Natural killer cell (primary cell): ENCODE measurements at regions of chr10 and their contacts with region 1.

Region 1: DNA sequence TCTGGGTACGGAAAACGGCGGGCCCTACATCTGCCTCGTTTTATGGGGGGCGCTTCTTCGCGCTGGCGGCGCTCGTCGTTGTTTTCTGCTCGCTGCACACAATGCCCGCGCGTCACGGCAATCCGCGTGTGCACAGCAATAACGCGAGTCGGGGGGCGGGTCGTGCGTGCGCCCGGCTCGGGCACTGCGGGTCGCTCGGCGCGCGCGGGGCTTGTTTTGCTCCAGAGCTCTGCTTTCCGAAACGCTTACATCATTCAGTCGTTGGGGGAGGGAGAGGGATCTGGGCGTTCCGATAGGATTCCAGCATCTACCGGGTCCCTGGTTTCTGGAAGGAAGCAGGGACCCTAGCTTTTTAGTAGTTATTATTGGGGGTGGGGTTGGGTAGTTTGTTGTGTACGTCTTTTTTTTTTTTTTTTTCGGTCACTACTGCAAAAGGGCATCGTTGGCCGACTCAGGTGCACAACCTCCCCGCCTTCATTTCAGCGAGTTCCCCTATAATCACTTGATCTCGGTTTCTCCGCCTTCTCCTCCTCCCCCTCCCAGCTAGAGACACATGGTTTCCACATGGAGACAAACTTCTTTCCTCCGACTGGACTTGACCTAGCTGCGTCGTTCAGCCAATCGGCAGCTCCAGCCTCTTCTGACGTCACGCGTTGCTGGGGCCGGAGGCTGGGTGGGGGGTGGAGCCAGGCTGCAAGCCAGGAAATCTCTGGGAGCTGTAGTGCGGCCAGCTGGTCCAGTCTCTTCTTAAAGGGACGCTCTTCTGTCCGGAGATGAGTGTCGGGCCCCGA is 3.5 kb downstream of the MXI1 start:
- DNase-seq: peak; percentile 88 to 95
- ATAC-seq: peak; percentile 73 to 81 (median 78)
- H3K4me3 ChIP-seq: peak overlapping the region; percentile 57
- H3K4me3 Mint-ChIP-seq: peak overlapping the region; percentile 96
- H3K27ac ChIP-seq: peak overlapping the region; percentile 71
- H3K27ac Mint-ChIP-seq: peak overlapping the region; percentile 63 to 86
- H3K4me1 ChIP-seq: peaks cover 48% of the 10 kb centered on the region
- H3K4me1 Mint-ChIP-seq: peaks cover 54 to 61% of the 10 kb centered on the region in 2 donors
- H3K27me3 ChIP-seq: peaks cover 30% of the 10 kb centered on the region
- H3K27me3 Mint-ChIP-seq: peaks cover 58 to 75% of the 10 kb centered on the region in 2 donors
- CTCF ChIP-seq: no peak

Region 2: GRCh38 chr10:110162741-110163145 is 48.1 kb before region 1 on chr10:
- intact Hi-C with region 1: loop called (anchors 1 kb)
- DNase-seq: no peak
- ATAC-seq: no peak
- H3K4me3 ChIP-seq: no peak overlapping the region
- H3K4me3 Mint-ChIP-seq: no peak overlapping the region
- H3K27ac ChIP-seq: no peak overlapping the region
- H3K27ac Mint-ChIP-seq: no peak overlapping the region
- H3K4me1 ChIP-seq: peaks cover 13% of the 10 kb centered on the region
- H3K4me1 Mint-ChIP-seq: peaks cover 10 to 11% of the 10 kb centered on the region in 2 donors
- H3K27me3 ChIP-seq: peaks cover 79% of the 10 kb centered on the region
- H3K27me3 Mint-ChIP-seq: peaks cover 59 to 72% of the 10 kb centered on the region in 2 donors
- CTCF ChIP-seq: no peak

Region 3: GRCh38 chr10:110296966-110297365 is 86.1 kb after region 1 on chr10:
- intact Hi-C with region 1: no loop called
- DNase-seq: no peak
- ATAC-seq: no peak
- H3K4me3 ChIP-seq: no peak overlapping the region
- H3K4me3 Mint-ChIP-seq: no peak overlapping the region
- H3K27ac ChIP-seq: no peak overlapping the region
- H3K27ac Mint-ChIP-seq: peak overlapping the region in 1 of 2 donors; percentile 3
- H3K4me1 ChIP-seq: no peaks in the 10 kb centered on the region
- H3K4me1 Mint-ChIP-seq: peaks cover 35% of the 10 kb centered on the region in 2 donors
- H3K27me3 ChIP-seq: no peaks in the 10 kb centered on the region
- H3K27me3 Mint-ChIP-seq: no peaks in the 10 kb centered on the region
- CTCF ChIP-seq: no peak